Vagina (tissue), 2 donors: ENCODE measurements at regions of chr13 and their contacts with region 1.

Region 1: GRCh38 chr13:20192158-20192835 is 441 bp downstream of the GJB2 start:
- DNase-seq: peak in 1 of 2 donors; percentile 58
- H3K4me3 ChIP-seq: peak overlapping the region; percentile 54 to 59
- H3K27ac ChIP-seq: peak overlapping the region; percentile 65
- H3K4me1 ChIP-seq: peaks cover 39% of the 10 kb centered on the region
- H3K27me3 ChIP-seq: peaks cover 16% of the 10 kb centered on the region
- CTCF ChIP-seq: no peak
- POLR2A ChIP-seq: no peak

Region 2: GRCh38 chr13:20127577-20128466 is 64.5 kb before region 1 on chr13:
- intact Hi-C with region 1: no loop called
- DNase-seq: no peak
- H3K4me3 ChIP-seq: peak overlapping the region; percentile 48 to 82
- H3K27ac ChIP-seq: peak overlapping the region; percentile 66
- H3K4me1 ChIP-seq: peaks cover 9% of the 10 kb centered on the region
- H3K27me3 ChIP-seq: no peaks in the 10 kb centered on the region
- CTCF ChIP-seq: peak in 1 of 3 experiments; percentile 13
- POLR2A ChIP-seq: no peak

Region 3: DNA sequence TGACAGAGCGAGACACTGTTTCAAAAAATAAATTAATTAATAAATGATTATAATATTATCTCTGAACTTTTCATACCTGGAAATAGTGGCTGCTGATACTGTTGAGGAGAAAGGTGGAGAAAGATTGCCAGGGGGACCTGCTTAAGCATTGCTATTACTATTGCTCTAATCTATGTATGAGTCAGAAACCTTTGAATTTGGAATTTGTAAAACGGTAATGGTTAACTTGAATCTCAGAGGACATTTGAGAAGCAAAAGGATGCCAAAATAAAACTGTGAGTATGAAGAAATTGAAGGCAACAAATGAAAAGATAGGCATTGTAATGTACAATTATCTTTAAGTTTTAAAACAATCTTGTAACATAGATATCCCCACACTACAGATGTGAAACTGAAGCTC is 989.4 kb after region 1 on chr13:
- intact Hi-C with region 1: loop called (anchors 5 kb)
- DNase-seq: no peak
- H3K4me3 ChIP-seq: no peak overlapping the region
- H3K27ac ChIP-seq: no peak overlapping the region
- H3K4me1 ChIP-seq: peaks cover 15% of the 10 kb centered on the region
- H3K27me3 ChIP-seq: no peaks in the 10 kb centered on the region
- CTCF ChIP-seq: no peak
- POLR2A ChIP-seq: no peak